ENCODE measurements at regions of chr2 and their contacts with region 1.

Region 1: GRCh38 chr2:60756191-60757041 is at the start of gene PAPOLG:
- DNase-seq: peak; percentile 99
- H3K4me3 Mint-ChIP-seq: peak within 1 kb of the TSS; percentile 97
- H3K27ac Mint-ChIP-seq: peak within 1 kb of the TSS; percentile 99
- H3K4me1 Mint-ChIP-seq: peaks cover 29% of the 10 kb centered on the region
- H3K27me3 Mint-ChIP-seq: no peaks in the 10 kb centered on the region
- total RNA-seq, gene PAPOLG: 18.1 and 21.6 TPM in 2 replicates

Region 2: GRCh38 chr2:60707750-60708371 is 48.6 kb before region 1 on chr2:
- intact Hi-C with region 1: loop called (anchors 5 kb)
- DNase-seq: peak; percentile 65
- H3K4me3 Mint-ChIP-seq: no peak overlapping the region
- H3K27ac Mint-ChIP-seq: no peak overlapping the region
- H3K4me1 Mint-ChIP-seq: no peaks in the 10 kb centered on the region
- H3K27me3 Mint-ChIP-seq: peaks cover 3% of the 10 kb centered on the region

Region 3: DNA sequence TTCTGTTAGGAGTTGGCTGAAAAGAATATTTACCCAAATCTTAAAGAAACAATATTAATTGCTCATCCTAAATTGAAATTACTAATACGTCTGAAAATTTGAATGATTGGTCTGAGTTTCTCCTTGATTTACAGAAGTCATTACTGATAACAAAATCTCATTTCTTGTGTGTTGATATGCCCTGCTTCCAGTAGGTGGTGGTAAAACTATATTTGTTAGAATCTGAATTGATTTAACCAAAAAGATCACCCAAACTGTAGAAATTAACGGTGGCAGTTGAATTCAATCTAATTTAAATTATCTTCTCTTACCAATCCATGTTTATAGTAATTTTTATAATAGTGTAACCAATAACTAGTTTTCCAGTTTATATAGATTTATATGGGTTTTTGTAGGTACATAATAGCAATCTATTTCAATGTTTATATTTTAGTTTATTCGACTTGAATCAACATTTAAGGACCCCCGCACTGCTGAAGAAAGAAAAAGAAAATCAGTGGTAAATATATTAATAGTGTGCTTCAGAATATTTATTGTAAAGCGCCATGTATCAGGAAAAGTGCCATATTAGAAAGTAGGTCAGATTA is 38.0 kb after region 1 on chr2:
- intact Hi-C with region 1: no loop called
- DNase-seq: no peak
- H3K4me3 Mint-ChIP-seq: no peak overlapping the region
- H3K27ac Mint-ChIP-seq: no peak overlapping the region
- H3K4me1 Mint-ChIP-seq: peaks cover 19% of the 10 kb centered on the region
- H3K27me3 Mint-ChIP-seq: no peaks in the 10 kb centered on the region

Region 4: DNA sequence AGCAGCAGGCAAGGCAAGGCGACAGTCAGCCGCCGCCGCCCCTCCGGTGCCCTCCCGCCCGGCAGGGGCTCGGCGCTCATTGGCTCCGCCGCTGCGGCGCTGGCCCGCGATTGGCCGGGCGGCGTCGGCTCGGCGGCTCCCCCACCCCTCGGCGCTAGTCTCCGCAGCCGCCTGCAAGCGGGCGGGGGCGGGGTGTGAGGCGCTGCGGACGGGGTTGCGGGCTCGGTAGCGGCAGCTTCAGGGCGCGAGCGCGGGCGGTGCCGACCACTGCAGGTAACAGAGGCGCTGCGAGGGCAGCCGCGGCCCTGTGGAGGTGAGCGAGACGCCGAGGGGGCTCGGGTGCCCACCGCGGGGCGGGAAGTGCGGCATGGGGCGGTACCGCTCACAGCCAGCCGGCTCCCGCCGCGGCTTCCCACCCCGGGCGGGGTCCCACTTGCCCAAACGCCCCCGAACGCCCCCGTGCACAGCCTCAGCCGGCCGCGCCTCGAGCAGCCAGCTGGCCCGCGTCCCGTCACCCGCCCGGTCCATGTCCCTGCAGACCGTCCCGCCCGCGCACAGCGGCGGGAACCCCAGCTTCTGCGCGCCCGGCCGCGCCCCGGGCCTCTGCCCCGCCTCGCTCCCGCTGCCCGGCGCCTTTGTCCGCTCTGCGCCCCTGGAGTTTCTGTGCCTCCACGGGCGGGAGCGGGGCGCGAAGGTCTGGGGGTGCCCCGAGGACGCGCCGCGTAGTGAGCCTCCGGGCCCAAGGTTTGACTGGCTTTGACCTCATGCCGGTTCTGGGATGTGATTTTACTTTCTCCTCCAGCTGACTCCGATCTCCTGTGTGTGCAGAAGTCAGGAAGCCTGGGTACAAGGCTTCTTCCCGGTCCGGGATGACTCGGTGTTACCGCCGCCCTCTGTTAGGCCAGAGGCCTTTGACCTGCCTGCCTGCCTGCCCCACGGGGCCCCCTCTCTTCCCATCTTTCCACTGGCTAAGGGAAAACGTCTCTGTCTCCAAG is 309.6 kb after region 1 on chr2 and contains the start of gene SANBR:
- intact Hi-C with region 1: loop called (anchors 2 kb)
- DNase-seq: peak; percentile 97
- H3K4me3 Mint-ChIP-seq: peak within 1 kb of the TSS; percentile 84
- H3K27ac Mint-ChIP-seq: peak within 1 kb of the TSS; percentile 80
- H3K4me1 Mint-ChIP-seq: peaks cover 8% of the 10 kb centered on the region
- H3K27me3 Mint-ChIP-seq: peaks cover 1% of the 10 kb centered on the region
- total RNA-seq, gene SANBR: 3.1 and 3.4 TPM in 2 replicates